ENCODE measurements at regions of chr3 and their contacts with region 1.

Region 1: DNA sequence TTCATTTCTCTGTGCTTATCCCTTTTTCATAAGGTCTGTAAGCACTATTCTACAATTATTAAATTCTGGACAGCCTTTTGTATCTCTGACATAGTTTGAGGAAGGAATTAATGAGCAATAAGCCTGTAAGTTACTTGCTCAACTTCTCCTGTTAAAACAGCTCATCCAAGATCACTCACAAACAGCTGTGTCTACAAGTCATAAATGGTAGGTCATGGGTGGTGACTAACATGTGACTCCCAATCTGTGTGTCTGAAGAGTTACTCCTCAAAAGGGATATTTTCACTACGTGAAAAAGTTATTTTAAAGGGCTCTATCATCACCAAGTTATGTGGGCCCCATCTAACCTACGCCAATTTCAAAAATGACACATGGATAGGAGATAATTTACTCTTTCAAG is 145.2 kb upstream of the CBLB start:
- DNase-seq: no peak
- H3K4me3 Mint-ChIP-seq: no peak overlapping the region
- H3K27ac Mint-ChIP-seq: peak overlapping the region; percentile 5
- H3K4me1 Mint-ChIP-seq: peaks cover 45% of the 10 kb centered on the region
- H3K27me3 Mint-ChIP-seq: no peaks in the 10 kb centered on the region

Region 2: GRCh38 chr3:105676621-105677300 is 337.2 kb before region 1 on chr3:
- intact Hi-C with region 1: loop called (anchors 5 kb)
- DNase-seq: no peak
- H3K4me3 Mint-ChIP-seq: no peak overlapping the region
- H3K27ac Mint-ChIP-seq: peak overlapping the region; percentile 74
- H3K4me1 Mint-ChIP-seq: peaks cover 23% of the 10 kb centered on the region
- H3K27me3 Mint-ChIP-seq: no peaks in the 10 kb centered on the region

Region 3: DNA sequence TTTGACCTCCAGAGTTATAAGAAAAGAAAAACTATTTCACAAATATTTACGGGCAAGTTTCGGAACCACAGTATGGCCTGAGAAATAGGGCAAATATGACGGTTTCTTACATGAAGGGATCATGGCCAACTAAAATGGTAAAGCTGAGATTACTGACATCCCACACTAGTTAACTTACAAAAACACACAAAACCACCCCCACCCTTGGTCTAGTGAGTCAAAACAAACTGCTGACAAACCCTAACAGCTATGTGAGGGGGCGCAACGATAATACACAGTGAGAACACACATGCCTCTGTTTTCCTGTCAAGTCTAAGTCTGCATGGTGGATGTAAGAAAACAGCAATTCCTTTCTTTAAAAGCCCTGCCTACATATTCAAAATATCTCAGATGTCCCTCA is 177.4 kb before region 1 on chr3:
- intact Hi-C with region 1: loop called (anchors 2 kb)
- DNase-seq: no peak
- H3K4me3 Mint-ChIP-seq: peak overlapping the region; percentile 47
- H3K27ac Mint-ChIP-seq: peak overlapping the region; percentile 83
- H3K4me1 Mint-ChIP-seq: peaks cover 67% of the 10 kb centered on the region
- H3K27me3 Mint-ChIP-seq: no peaks in the 10 kb centered on the region

Region 4: DNA sequence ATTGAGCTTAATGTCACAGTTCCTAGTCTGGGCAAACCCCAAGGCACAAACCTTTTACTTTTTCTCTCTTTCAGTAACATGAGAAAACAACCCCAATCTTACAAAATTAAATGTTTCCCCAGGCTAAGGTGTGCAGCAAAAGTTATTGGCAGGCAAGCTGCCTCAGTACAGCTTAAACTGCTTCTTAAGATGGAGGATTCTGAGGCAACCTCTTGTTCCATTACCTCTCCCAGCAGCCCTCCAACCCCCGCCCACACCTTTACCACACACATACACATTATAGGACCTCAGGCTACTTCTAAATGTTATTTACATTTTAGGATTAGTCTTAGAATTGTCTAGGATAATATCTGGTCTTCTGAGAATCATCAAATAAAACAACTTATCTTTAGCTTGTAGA is 122.9 kb before region 1 on chr3:
- intact Hi-C with region 1: loop called (anchors 1 kb)
- DNase-seq: no peak
- H3K4me3 Mint-ChIP-seq: no peak overlapping the region
- H3K27ac Mint-ChIP-seq: peak overlapping the region; percentile 79
- H3K4me1 Mint-ChIP-seq: peaks cover 10% of the 10 kb centered on the region
- H3K27me3 Mint-ChIP-seq: no peaks in the 10 kb centered on the region

Region 5: DNA sequence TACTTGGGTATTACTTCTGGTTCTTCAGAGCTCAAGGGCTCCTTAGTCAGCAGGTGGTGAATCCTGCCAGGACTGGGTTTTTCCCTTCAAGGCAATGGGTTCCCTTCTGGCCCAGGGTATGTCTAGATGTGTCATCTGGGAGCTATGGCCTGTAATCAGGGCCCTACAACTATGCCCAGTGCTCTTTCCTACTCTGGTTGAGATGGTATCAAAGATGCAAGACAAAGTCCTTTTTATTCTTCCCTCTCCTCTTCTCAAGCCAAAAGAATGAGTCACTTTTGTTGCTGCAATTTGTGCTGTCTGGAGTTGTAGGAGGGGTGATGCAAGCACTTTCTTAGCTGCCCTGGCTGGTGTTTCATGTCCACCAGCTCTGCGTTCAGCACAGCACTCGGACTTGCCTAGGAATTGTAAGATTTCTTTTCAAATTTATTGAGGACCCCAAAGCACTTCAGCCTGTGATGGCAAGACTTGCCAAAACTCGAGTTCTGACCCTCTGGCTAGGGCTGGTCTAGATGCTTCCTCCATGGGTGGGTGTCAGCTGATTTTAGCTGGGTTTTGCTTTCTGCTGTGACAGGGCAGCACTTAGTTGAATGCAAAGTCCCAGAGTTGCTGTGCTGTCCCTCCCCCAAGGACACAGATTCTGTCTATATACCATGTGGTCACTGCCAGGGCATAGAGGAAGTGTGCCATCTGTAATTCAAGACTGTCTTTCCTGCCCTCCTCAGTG is 16.0 kb before region 1 on chr3:
- intact Hi-C with region 1: no loop called
- DNase-seq: no peak
- H3K4me3 Mint-ChIP-seq: no peak overlapping the region
- H3K27ac Mint-ChIP-seq: no peak overlapping the region
- H3K4me1 Mint-ChIP-seq: peaks cover 10% of the 10 kb centered on the region
- H3K27me3 Mint-ChIP-seq: no peaks in the 10 kb centered on the region

Region 6: GRCh38 chr3:106025151-106025722 is 11.3 kb after region 1 on chr3:
- intact Hi-C with region 1: no loop called
- DNase-seq: no peak
- H3K4me3 Mint-ChIP-seq: no peak overlapping the region
- H3K27ac Mint-ChIP-seq: no peak overlapping the region
- H3K4me1 Mint-ChIP-seq: peaks cover 4% of the 10 kb centered on the region
- H3K27me3 Mint-ChIP-seq: no peaks in the 10 kb centered on the region

Region 7: GRCh38 chr3:106119614-106120082 is 105.7 kb after region 1 on chr3:
- intact Hi-C with region 1: loop called (anchors 2 kb)
- DNase-seq: no peak
- H3K4me3 Mint-ChIP-seq: no peak overlapping the region
- H3K27ac Mint-ChIP-seq: peak overlapping the region; percentile 80
- H3K4me1 Mint-ChIP-seq: peaks cover 23% of the 10 kb centered on the region
- H3K27me3 Mint-ChIP-seq: no peaks in the 10 kb centered on the region

Region 8: GRCh38 chr3:106215047-106215446 is 201.1 kb after region 1 on chr3:
- intact Hi-C with region 1: loop called (anchors 10 kb)
- DNase-seq: no peak
- H3K4me3 Mint-ChIP-seq: peak overlapping the region; percentile 19
- H3K27ac Mint-ChIP-seq: peak overlapping the region; percentile 79
- H3K4me1 Mint-ChIP-seq: peaks cover 47% of the 10 kb centered on the region
- H3K27me3 Mint-ChIP-seq: no peaks in the 10 kb centered on the region

Region 9: DNA sequence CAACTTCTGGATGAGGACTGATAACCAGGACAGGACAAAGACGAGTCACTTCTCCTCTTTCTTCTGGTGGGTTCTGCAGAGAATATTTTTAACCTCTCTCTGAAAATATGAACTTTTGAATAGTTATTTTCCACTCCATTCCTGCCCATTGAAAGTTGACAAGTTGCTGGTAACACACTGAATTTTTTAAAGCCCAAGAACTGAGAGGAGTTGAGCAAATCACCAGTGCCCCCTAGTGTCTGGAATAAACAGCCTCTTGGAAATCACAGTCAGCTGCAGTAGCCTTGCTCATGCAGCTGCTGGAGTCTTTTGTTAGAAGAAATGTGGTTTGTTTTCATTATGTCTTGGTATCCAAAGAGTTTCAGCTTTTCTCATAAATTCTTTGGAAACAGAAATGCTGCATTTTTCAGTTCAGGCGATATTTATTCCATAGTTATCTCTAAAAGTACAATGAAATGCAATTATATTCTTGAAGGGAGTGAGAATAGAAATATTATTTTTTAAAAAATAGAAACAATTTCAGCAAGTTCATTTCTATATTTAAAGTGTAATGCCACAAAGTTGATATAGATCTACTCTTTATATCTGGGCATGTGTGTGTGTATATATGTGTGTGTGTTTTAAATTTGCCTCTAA is 595.8 kb after region 1 on chr3:
- intact Hi-C with region 1: loop called (anchors 1 kb)
- DNase-seq: peak; percentile 41
- H3K4me3 Mint-ChIP-seq: no peak overlapping the region
- H3K27ac Mint-ChIP-seq: peak overlapping the region; percentile 73
- H3K4me1 Mint-ChIP-seq: peaks cover 26% of the 10 kb centered on the region
- H3K27me3 Mint-ChIP-seq: no peaks in the 10 kb centered on the region